ENCODE measurements at regions of chr4 and their contacts with region 1.

Region 1: GRCh38 chr4:41934815-41935651 is at the start of gene TMEM33:
- DNase-seq: peak; percentile 77 to 84 (median 78)
- H3K4me3 ChIP-seq: peak within 1 kb of the TSS; percentile 68 to 89
- H3K4me3 Mint-ChIP-seq: peak within 1 kb of the TSS; percentile 95 to 98 (median 96)
- H3K27ac ChIP-seq: peak within 1 kb of the TSS; percentile 73
- H3K27ac Mint-ChIP-seq: peak within 1 kb of the TSS; percentile 48 to 93 (median 92)
- H3K4me1 ChIP-seq: peaks cover 40% of the 10 kb centered on the region
- H3K4me1 Mint-ChIP-seq: peaks cover 32 to 57% (median 46%) of the 10 kb centered on the region in 4 donors
- H3K27me3 ChIP-seq: no peaks in the 10 kb centered on the region
- H3K27me3 Mint-ChIP-seq: peaks cover 0 to 3% of the 10 kb centered on the region in 2 donors
- total RNA-seq, gene TMEM33: 41.7 to 43.6 TPM

Region 2: GRCh38 chr4:41990365-41991111 is 55.5 kb after region 1 on chr4 and contains the start of gene SLC30A9:
- CTCF ChIA-PET with region 1: no interaction called
- POLR2A ChIA-PET with region 1: interaction called, 19 read pairs
- intact Hi-C with region 1: loop called (anchors 1 kb)
- DNase-seq: peak; percentile 93 to 97 (median 94)
- H3K4me3 ChIP-seq: peak within 1 kb of the TSS; percentile 67 to 87
- H3K4me3 Mint-ChIP-seq: peak within 1 kb of the TSS; percentile 90 to 99 (median 98)
- H3K27ac ChIP-seq: peak within 1 kb of the TSS; percentile 86
- H3K27ac Mint-ChIP-seq: peak within 1 kb of the TSS; percentile 96 to 100 (median 99)
- H3K4me1 ChIP-seq: peaks cover 32% of the 10 kb centered on the region
- H3K4me1 Mint-ChIP-seq: peaks cover 17 to 40% (median 29%) of the 10 kb centered on the region in 4 donors
- H3K27me3 ChIP-seq: no peaks in the 10 kb centered on the region
- H3K27me3 Mint-ChIP-seq: no peaks in the 10 kb centered on the region
- total RNA-seq, gene SLC30A9: 28.6 to 31.5 TPM

Region 3: DNA sequence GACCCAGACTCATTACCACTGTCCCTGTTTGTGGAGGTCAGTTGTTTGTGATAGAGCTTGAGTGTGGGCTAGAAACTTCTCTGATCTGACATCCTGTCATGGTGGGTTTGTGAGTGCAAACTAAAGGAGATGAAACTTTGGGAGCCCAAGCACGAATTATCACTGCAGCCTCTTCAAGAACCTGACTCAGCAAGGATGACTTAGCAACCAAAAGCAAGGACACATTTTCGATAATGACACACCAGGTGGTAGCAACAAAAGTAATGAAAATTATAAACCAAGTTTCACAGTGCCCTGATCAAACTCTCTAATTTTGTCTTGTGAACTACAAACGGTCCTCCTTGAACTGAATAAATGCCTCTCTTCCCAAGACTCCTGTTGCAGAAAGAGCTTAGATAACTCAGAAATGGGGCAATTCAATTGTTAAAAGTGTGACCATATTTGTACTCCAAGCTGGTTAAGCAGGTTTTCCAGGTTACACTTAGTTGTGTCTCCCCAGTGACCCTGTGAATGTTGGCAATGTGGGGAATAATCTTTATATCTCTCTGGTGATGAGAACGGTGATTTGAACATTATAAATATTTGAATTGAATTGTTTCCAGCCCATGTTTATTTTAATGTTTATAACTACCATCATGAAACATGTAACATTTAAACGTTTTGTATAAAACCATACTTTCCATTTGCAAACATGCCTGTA is 774.5 kb after region 1 on chr4:
- CTCF ChIA-PET with region 1: no interaction called
- POLR2A ChIA-PET with region 1: no interaction called
- intact Hi-C with region 1: no loop called
- DNase-seq: no peak
- H3K4me3 ChIP-seq: no peak overlapping the region
- H3K4me3 Mint-ChIP-seq: no peak overlapping the region
- H3K27ac ChIP-seq: no peak overlapping the region
- H3K27ac Mint-ChIP-seq: no peak overlapping the region
- H3K4me1 ChIP-seq: no peaks in the 10 kb centered on the region
- H3K4me1 Mint-ChIP-seq: no peaks in the 10 kb centered on the region
- H3K27me3 ChIP-seq: no peaks in the 10 kb centered on the region
- H3K27me3 Mint-ChIP-seq: peaks cover 0 to 13% of the 10 kb centered on the region in 2 donors